ENCODE measurements at regions of chr22 and their contacts with region 1.

Region 1: GRCh38 chr22:41621099-41621910 is at the start of gene XRCC6:
- DNase-seq: peak; percentile 100

Region 2: GRCh38 chr22:41501209-41501608 is 120.1 kb before region 1 on chr22:
- CTCF ChIA-PET with region 1: no interaction called
- POLR2A ChIA-PET with region 1: no interaction called
- DNase-seq: no peak

Region 3: GRCh38 chr22:41557401-41558240 is 63.7 kb before region 1 on chr22:
- CTCF ChIA-PET with region 1: no interaction called
- POLR2A ChIA-PET with region 1: interaction called, 10 read pairs
- DNase-seq: no peak

Region 4: DNA sequence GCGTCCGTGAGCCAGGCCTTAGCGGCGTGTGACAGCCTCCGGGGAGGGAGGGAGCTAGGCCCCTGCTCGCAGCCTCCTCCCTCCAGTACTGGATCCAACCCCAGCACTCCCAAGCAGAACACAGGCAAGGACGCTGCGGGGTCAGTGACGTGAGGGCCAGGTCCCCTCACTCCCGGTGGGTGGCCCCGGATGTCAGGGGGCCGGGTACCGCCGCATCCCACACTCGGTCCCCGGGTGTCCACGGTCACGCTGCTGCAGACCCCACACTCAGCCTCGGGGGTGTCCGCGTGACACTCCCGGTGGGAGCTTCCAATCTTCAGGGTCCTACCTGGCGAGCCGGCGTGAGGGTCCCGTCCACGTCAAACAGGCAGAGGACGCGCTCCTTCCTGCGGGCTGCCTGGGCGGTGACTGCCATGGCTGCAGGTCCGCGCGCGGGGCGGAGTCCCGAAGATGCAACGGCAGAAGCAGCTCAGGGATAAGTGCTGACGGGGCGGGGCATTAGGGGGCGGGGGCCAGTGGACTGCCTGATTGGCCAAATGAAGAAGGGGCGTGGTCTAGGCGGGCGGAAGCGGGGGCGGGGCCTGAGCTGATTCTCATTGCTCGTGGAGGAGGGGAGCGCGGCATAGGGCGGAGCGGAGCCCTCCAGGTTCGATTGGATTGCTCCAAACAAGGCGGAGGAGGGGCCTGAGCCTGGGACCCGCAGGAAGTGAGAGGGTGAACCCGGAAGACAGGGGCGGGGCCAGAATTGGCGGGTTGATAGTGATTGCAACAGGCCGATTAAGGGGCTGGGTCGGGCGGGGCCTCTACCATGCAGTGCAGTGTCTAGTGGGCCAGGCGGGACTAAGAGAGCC is 31.7 kb before region 1 on chr22 and contains the start of gene PMM1:
- CTCF ChIA-PET with region 1: no interaction called
- POLR2A ChIA-PET with region 1: interaction called, 26 read pairs
- DNase-seq: peak; percentile 99

Region 5: DNA sequence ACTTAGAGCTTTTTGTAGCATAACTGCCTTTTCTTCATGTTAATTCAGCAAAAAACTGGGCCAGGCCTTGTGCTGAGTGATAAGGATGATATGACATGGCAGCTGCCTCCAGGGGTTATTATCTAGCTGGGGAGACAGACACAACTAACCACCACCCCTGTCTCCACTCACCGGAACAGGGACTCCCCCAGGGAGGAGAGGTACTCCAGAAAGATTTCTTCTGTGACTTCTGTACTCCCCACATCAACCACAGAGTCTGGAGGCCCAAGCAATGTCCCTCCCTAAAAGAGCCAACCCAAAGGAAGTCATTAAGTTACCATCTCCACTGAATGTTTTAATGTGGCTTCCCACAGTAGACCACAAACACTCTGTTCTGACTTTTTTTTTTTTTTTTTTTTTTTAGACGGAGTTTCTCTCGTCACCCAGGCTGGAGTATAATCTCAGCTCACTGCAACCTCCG is 17.4 kb before region 1 on chr22:
- CTCF ChIA-PET with region 1: no interaction called
- POLR2A ChIA-PET with region 1: interaction called, 19 read pairs
- DNase-seq: no peak

Region 6: DNA sequence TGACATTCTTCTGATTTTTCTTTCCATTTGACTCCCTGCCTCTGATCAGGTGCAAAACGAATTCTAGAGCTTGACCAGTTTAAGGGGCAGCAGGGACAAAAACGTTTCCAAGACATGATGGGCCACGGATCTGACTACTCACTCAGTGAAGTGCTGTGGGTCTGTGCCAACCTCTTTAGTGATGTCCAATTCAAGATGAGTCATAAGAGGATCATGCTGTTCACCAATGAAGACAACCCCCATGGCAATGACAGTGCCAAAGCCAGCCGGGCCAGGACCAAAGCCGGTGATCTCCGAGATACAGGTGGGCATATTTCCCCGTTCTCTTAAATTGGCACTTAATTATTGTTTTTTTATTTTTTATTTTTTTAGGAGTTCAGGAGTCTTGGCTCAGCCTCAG is 15.2 kb after region 1 on chr22:
- CTCF ChIA-PET with region 1: no interaction called
- POLR2A ChIA-PET with region 1: interaction called, 15 read pairs
- DNase-seq: no peak

Region 7: DNA sequence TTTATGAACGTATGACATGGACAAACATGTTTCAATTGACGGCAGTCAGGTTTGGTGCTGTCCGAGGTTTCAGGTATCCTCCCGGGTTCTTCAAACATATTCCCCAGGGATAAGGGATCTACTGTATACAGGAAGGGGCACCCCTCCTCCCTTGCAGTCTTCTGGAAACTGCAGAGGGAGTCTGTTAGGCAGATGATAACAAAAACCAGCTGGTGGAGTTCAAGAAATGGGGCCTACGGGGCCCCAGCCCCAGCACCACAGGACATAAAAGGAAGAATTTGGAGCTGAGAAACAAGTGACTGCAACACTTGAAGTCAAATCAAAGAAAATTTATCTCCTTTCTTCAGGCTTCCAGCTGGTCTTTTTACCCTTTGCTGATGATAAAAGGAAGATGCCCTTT is 35.3 kb after region 1 on chr22:
- CTCF ChIA-PET with region 1: no interaction called
- POLR2A ChIA-PET with region 1: interaction called, 15 read pairs
- DNase-seq: no peak

Region 8: DNA sequence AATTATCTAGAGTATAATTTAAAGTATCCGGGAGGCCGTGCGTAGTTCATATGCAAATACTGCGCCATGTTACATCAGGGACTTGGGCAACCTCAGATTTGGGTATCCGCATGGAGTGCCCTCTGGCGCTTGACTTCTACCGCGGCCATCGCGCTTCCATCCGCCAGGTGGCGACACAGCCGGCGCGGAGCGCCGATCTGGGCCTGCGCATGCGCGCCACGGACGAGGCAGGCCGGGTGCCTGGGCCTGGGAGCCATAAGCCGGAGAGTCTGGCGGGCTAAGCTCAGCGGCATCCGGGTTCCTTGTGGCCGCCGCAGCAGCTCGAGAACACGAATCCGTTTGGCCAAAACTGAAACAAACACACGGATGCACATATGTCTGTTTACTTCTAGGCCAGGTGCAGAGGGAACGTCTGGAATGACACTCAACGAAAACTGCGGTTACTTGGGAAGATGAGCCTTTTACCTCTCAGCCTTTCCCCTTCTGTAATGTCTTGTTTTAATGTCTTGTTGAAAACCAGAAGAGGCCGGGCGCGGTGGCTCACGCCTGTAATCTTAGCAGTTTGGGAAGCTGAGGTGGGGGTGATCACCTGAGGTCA is 45.5 kb after region 1 on chr22:
- CTCF ChIA-PET with region 1: no interaction called
- POLR2A ChIA-PET with region 1: interaction called, 21 read pairs
- DNase-seq: peak; percentile 99

Region 9: DNA sequence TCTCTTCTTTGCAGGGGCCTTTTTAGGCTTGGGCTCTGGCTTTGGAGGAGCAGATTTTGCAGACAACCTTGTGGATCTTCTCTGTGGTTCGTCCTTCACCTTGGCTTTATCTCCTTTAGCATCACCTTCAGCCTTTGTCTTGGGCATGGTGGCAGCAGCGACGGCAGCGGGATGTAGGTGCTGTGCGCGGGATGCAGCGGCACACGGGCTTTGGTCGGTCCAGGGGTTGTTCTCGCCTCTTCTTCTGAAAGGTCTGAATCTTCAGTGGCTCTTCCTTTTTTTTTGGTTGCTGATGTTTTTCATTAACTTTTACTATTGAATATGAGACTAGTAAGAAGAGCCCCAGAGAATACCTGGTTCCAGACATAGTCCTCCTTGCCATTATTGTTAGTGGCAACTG is 88.0 kb after region 1 on chr22:
- CTCF ChIA-PET with region 1: no interaction called
- POLR2A ChIA-PET with region 1: no interaction called
- DNase-seq: no peak

Region 10: DNA sequence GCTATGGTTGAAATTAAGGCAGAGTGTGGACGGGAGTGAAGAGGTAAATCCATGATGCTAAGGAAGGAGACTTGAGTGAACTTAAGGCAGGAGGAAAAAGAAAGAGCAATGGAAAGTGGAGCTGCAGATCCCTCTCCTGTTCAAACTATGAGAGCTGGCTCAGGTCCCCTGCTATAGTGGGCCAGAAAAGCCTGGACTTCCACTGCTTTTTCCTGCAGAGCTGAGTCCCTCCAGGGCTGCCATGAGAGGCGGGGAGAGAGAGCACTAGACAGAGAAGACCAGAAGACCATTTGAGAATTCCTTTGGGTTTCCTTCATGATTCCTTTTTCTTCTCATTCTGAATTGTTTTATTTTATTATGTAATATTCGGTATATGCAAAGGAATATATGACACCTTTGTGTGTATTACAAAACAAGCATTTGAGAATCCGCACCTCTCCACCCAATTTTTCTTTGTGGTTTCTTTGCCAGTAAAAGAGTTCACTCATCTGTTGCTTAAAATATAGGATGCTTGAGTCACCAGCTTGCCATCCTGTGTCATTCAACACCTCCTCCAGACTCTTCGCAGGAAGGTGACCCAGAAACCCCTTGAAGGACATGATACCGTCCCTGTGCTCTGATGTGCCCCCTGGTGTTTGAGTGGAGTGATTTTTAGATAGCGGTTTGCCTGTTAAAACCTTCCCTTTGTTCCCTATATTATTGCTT is 236.0 kb after region 1 on chr22:
- CTCF ChIA-PET with region 1: no interaction called
- POLR2A ChIA-PET with region 1: no interaction called
- DNase-seq: peak; percentile 62

Region 11: DNA sequence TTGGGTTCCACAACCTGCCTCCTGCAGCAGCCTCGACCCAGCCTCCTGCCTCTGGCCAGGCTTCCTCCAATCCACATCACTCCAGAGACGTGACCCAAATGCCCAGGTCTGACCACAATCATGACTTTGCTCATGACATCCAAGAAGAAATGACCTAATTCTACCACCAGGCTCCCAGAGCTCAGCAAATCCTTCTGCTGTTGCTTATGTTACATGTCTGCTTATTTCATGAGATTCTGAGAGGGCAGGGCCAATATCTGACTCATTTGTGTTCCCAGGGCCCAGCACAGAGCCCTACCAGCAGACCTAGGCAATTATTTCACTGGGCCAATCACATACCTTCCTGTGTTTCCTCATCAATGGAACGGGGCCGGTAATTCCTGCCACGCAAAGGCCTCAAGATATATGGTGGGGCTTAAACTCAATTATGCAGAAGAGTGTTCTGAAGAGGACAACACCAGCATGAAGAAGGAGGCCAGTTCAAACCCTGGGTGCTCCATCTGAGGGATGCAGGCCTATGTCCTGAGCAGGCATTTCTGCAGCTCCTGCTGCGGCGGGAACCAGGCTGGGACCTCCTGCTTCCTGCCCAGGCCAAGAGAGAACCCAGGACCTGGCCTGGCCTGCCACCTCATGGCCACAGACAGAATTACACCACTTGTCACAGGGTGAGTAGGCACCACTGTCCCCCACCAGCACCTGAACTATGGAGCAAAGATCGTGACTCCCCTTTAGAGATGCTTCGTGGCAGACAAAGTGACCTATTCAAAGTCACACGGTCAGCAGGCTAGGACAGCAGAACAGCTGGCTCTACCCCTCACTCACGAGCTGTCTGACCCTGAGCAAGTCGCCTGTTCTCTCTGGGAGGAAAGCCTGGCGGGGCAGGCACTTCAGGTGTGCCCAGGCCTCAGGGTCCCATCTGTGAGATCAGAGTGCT is 319.8 kb after region 1 on chr22:
- CTCF ChIA-PET with region 1: no interaction called
- POLR2A ChIA-PET with region 1: no interaction called
- DNase-seq: peak; percentile 76

Measured in HEK293T (cell line).